ENCODE measurements at regions of chr4 and their contacts with region 1.

Region 1: DNA sequence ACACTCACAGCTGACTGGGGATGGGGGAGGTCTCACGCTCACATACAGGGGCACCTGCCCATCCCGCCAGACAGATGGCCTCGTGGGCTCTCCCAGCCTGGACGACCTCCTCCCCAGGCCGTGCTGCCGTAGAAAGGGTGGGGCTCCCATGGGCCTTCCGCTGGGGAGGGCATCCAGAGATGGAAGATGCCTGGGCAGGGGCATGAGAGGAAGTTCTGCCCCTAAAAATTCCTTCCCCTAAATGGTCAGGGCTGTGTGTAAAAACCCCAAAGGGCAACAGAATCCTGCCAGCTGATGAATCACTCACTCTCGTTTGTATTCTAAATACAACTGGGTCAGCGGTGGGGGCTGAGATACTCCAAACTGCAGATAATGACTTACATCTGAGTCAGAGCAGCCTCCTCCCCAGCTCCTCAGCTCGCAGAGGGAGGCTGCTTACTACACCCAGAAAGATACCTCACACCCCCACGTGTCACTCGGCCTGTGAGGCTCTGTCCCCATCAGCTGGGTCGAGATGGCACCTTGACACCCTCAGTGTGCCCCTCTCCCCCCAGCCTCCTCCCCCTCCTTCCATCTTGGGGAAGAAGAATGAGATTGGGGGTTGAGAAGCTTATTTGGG is 10.1 kb downstream of the WDR1 start:
- DNase-seq: peak; percentile 87
- ATAC-seq: peak; percentile 86
- H3K4me3 Mint-ChIP-seq: peak overlapping the region; percentile 29
- H3K27ac Mint-ChIP-seq: peak overlapping the region; percentile 81
- H3K4me1 Mint-ChIP-seq: peaks cover 99% of the 10 kb centered on the region
- H3K27me3 Mint-ChIP-seq: no peaks in the 10 kb centered on the region

Region 2: GRCh38 chr4:10096201-10096977 is 10.1 kb before region 1 on chr4:
- CTCF ChIA-PET with region 1: interaction called, 15 read pairs
- DNase-seq: peak; percentile 94
- ATAC-seq: peak; percentile 79
- H3K4me3 Mint-ChIP-seq: peak overlapping the region; percentile 35
- H3K27ac Mint-ChIP-seq: peak overlapping the region; percentile 95
- H3K4me1 Mint-ChIP-seq: peaks cover 95% of the 10 kb centered on the region
- H3K27me3 Mint-ChIP-seq: no peaks in the 10 kb centered on the region

Region 3: GRCh38 chr4:10140866-10141759 is 34.6 kb after region 1 on chr4:
- CTCF ChIA-PET with region 1: no interaction called
- DNase-seq: no peak
- ATAC-seq: no peak
- H3K4me3 Mint-ChIP-seq: no peak overlapping the region
- H3K27ac Mint-ChIP-seq: no peak overlapping the region
- H3K4me1 Mint-ChIP-seq: no peaks in the 10 kb centered on the region
- H3K27me3 Mint-ChIP-seq: no peaks in the 10 kb centered on the region

Measured in activated CD8-positive, alpha-beta memory T cell treated with anti-CD3 and anti-CD28 coated beads, Interleukin-2, amount 10 ng/mL, durations not matched to agents 7 days and 5 days (primary cell).